Activated CD4-positive, alpha-beta memory T cell treated with anti-CD3 and anti-CD28 coated beads for 36 hours (primary cell): ENCODE measurements at regions of chr6 and their contacts with region 1.

Region 1: GRCh38 chr6:166097915-166098522 is 69.6 kb downstream of the TBXT start:
- DNase-seq: peak; percentile 65
- H3K4me3 Mint-ChIP-seq: no peak overlapping the region
- H3K27ac Mint-ChIP-seq: no peak overlapping the region
- H3K4me1 Mint-ChIP-seq: peaks cover 3% of the 10 kb centered on the region
- H3K27me3 Mint-ChIP-seq: peaks cover 25% of the 10 kb centered on the region

Region 2: DNA sequence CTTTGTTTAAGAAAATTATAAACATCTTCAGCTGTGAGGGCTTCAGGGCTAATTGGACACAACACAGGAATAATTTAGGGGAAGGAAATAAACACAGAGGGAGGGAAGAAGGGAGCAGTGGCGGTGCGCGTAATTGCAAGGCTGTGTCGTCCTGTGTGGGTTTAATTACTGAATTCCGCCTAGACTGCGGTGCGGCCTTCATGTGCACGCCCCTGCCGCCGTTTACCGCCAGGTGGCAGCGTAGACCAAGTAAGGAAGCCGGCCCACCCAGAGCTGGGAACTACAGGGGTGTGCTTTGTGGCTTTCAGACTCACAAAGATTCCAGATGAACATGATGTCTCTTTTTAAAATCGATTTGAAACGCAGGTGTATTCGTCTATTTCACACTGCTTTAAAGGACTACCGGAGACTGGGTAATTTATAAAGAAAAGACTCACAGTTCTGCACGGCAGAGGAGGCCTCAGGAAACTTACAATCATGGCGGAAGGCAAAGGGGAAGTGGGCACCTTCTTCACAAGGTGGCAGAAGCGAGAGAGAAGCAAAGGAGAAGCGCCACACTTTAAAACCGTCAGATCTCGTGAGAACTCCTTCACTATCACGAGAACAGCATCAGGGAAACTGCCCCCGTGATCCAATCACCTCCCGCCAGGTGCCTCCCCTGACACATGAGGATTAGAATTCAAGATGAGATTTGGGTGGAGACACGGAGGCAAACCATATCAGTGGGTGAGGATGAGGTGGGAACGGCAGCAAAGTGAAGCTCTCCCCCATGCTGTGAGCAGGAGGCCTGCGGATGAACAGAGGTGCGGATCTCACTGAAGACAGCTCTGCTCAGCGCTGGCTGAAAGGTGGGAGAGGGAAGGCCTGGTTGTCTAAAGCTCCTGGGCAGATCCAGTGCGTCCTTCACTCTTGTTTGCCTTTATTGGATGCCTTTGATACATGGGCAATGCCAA is 212.9 kb before region 1 on chr6:
- CTCF ChIA-PET with region 1: interaction called, 25 read pairs
- POLR2A ChIA-PET with region 1: no interaction called
- intact Hi-C with region 1: loop called (anchors 2 kb)
- DNase-seq: peak; percentile 75
- H3K4me3 Mint-ChIP-seq: no peak overlapping the region
- H3K27ac Mint-ChIP-seq: no peak overlapping the region
- H3K4me1 Mint-ChIP-seq: peaks cover 6% of the 10 kb centered on the region
- H3K27me3 Mint-ChIP-seq: peaks cover 9% of the 10 kb centered on the region